Ascending aorta (tissue), 2 donors: ENCODE measurements at regions of chr3 and their contacts with region 1.

Region 1: GRCh38 chr3:191328962-191329653 is at the start of gene CCDC50:
- DNase-seq: peak; percentile 22 to 89
- H3K4me3 ChIP-seq: peak within 1 kb of the TSS; percentile 87 to 100
- H3K27ac ChIP-seq: peak within 1 kb of the TSS; percentile 92 to 99
- H3K4me1 ChIP-seq: peaks cover 3 to 13% of the 10 kb centered on the region in 2 donors
- H3K27me3 ChIP-seq: no peaks in the 10 kb centered on the region
- CTCF ChIP-seq: no peak
- total RNA-seq, gene CCDC50: 82.8 TPM

Region 2: GRCh38 chr3:191356611-191357439 is 27.7 kb after region 1 on chr3:
- intact Hi-C with region 1: loop called (anchors 1 kb)
- DNase-seq: peak in 1 of 2 donors; percentile 69
- H3K4me3 ChIP-seq: peak overlapping the region in 1 of 2 donors; percentile 26
- H3K27ac ChIP-seq: peak overlapping the region; percentile 41 to 69
- H3K4me1 ChIP-seq: peaks cover 3 to 23% of the 10 kb centered on the region in 2 donors
- H3K27me3 ChIP-seq: no peaks in the 10 kb centered on the region
- CTCF ChIP-seq: no peak

Region 3: GRCh38 chr3:191376516-191377141 is 47.5 kb after region 1 on chr3:
- intact Hi-C with region 1: loop called (anchors 5 kb)
- DNase-seq: no peak
- H3K4me3 ChIP-seq: no peak overlapping the region
- H3K27ac ChIP-seq: peak overlapping the region in 1 of 2 donors; percentile 20
- H3K4me1 ChIP-seq: peaks cover 3 to 13% of the 10 kb centered on the region in 2 donors
- H3K27me3 ChIP-seq: no peaks in the 10 kb centered on the region
- CTCF ChIP-seq: no peak

Region 4: GRCh38 chr3:191387441-191388077 is 58.5 kb after region 1 on chr3:
- intact Hi-C with region 1: no loop called
- DNase-seq: no peak
- H3K4me3 ChIP-seq: no peak overlapping the region
- H3K27ac ChIP-seq: no peak overlapping the region
- H3K4me1 ChIP-seq: no peaks in the 10 kb centered on the region
- H3K27me3 ChIP-seq: no peaks in the 10 kb centered on the region
- CTCF ChIP-seq: no peak

Region 5: DNA sequence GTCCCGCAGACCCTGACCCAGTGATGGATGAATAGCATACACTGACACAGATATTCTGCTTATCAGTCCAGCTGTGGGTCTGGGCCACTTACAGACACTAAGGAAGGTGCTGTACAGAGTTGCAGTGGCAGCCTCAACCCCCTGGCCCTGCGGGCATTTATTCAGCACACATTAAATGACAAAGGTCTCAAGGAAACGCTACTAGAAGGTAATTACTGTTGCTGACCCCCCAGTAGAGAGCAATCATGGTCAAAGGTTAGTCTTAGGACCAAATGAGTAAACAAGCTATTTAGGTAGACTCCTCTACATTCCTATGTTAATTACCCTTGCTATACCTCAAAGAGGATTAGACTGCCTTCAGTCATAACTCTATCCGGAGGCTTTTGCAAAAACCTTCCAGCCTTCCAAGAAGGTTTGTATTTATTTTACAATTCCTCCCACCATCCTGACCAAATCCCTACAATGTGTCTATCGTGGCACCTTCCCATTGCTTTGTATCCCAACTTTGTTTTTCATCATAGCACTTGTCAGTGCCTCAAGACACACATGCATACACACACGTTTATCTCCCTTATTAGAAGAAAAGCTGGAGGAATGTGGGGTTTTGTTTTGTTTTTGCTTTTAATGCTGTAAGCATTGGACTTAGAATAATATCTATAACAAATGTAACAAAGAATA is 359.8 kb after region 1 on chr3:
- intact Hi-C with region 1: no loop called
- DNase-seq: no peak
- H3K4me3 ChIP-seq: no peak overlapping the region
- H3K27ac ChIP-seq: no peak overlapping the region
- H3K4me1 ChIP-seq: no peaks in the 10 kb centered on the region
- H3K27me3 ChIP-seq: no peaks in the 10 kb centered on the region
- CTCF ChIP-seq: no peak